ENCODE measurements at regions of chr15 and their contacts with region 1.

Region 1: GRCh38 chr15:59688841-59689625 is at the start of gene BNIP2:
- DNase-seq: peak; percentile 92 to 99 (median 94)
- ATAC-seq: peak; percentile 94
- H3K4me3 ChIP-seq: peak within 1 kb of the TSS; percentile 98
- H3K27ac ChIP-seq: peak within 1 kb of the TSS; percentile 99
- H3K4me1 ChIP-seq: peaks cover 12 to 17% of the 10 kb centered on the region in 2 experiments
- H3K27me3 ChIP-seq: no peaks in the 10 kb centered on the region
- CTCF ChIP-seq: peak in 1 of 3 experiments; percentile 24; a peak in 2 of 6 replicates
- EP300 ChIP-seq: 0 out of 2 replicates have a peak, but pooled peaks have one; percentile 1
- POLR2A ChIP-seq: peak; percentile 88
- RAD21 ChIP-seq: no peak
- polyA plus RNA-seq, gene BNIP2: 19.6 to 22.2 TPM

Region 2: DNA sequence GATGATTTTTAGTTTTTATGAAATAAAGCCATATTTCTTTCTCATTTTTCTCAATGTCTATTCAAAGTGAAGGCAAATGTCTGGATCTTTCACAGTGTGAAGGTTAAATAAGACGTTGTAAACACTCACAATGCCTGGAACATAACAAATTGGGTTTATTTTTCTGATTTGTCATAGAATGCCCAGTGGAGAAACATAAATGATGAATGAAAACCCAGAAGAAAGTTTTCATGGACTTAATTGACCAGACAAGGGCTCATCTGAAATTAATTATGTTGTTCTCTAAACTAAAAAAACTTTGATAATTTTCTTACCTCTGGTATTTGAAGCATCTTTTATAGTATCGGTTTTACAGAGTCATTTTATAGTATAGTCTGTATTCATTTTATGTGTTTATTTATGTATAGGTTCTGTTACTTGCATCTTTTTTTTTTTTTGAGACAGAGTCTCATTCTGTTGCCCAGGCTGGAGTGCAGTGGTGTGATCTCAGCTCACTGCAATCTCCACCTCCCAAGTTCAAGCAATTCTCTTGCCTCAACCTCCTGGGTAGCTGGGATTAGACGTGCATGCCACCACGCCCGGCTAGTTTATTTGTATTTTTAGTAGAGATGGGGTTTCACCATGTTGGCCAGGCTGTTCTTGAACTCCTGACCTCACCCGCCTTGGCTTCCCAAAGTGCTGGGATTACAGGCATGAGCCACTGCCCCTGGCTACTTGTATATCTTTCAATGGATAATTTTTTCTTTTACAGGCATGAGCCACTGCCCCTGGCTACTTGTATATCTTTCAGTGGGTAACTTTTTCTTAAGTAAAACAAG is 15.2 kb after region 1 on chr15:
- CTCF ChIA-PET with region 1: no interaction called
- POLR2A ChIA-PET with region 1: no interaction called
- in situ Hi-C with region 1: no loop called
- intact Hi-C with region 1: no loop called
- DNase-seq: no peak
- ATAC-seq: no peak
- H3K4me3 ChIP-seq: no peak overlapping the region
- H3K27ac ChIP-seq: no peak overlapping the region
- H3K4me1 ChIP-seq: 0 out of 5 replicates have a peak, but pooled peaks cover 0 to 2% of the 10 kb centered on the region in 2 experiments
- H3K27me3 ChIP-seq: no peaks in the 10 kb centered on the region; a peak in 1 of 5 replicates
- CTCF ChIP-seq: no peak
- EP300 ChIP-seq: no peak
- POLR2A ChIP-seq: no peak
- RAD21 ChIP-seq: no peak

Region 3: DNA sequence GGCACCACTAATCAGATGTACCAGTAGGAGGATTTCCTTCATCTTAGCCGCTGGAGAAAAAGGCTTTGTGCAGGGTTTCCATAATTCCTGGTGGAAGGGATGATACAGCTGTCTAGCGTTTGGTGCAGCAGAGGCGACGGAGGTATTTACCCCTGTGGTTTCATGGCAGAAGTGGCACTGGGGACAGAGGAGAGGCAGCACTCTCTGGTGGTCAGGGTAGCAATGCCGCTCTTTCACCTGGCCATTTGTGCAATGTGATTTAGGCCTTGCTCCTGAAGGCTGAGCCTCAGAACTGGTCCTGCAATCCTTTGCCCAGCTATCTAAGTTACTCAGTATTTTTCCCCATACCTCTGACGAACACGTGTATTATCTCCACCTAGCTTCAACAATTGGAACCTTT is 47.2 kb after region 1 on chr15:
- CTCF ChIA-PET with region 1: no interaction called
- POLR2A ChIA-PET with region 1: no interaction called
- in situ Hi-C with region 1: no loop called
- intact Hi-C with region 1: loop called (anchors 5 kb)
- DNase-seq: no peak
- ATAC-seq: no peak
- H3K4me3 ChIP-seq: no peak overlapping the region
- H3K27ac ChIP-seq: no peak overlapping the region
- H3K4me1 ChIP-seq: no peaks in the 10 kb centered on the region
- H3K27me3 ChIP-seq: peaks cover 15 to 21% of the 10 kb centered on the region in 2 experiments
- CTCF ChIP-seq: peak in 2 of 3 experiments; percentile 11 to 12; a peak in 2 of 6 replicates
- EP300 ChIP-seq: no peak
- POLR2A ChIP-seq: no peak
- RAD21 ChIP-seq: peak in 1 of 2 experiments; percentile 23; a peak in 1 of 4 replicates

Region 4: GRCh38 chr15:59917504-59918157 is 228.6 kb after region 1 on chr15:
- CTCF ChIA-PET with region 1: no interaction called
- POLR2A ChIA-PET with region 1: no interaction called
- in situ Hi-C with region 1: no loop called
- intact Hi-C with region 1: loop called (anchors 10 kb)
- DNase-seq: peak; percentile 35 to 63 (median 52)
- ATAC-seq: peak; percentile 100
- H3K4me3 ChIP-seq: no peak overlapping the region
- H3K27ac ChIP-seq: no peak overlapping the region
- H3K4me1 ChIP-seq: no peaks in the 10 kb centered on the region
- H3K27me3 ChIP-seq: peaks cover 0 to under 1% of the 10 kb centered on the region in 2 experiments; a peak in 2 of 5 replicates
- CTCF ChIP-seq: peak; percentile 66 to 70 (median 67)
- EP300 ChIP-seq: no peak
- POLR2A ChIP-seq: no peak
- RAD21 ChIP-seq: peak; percentile 75 to 78

Region 5: DNA sequence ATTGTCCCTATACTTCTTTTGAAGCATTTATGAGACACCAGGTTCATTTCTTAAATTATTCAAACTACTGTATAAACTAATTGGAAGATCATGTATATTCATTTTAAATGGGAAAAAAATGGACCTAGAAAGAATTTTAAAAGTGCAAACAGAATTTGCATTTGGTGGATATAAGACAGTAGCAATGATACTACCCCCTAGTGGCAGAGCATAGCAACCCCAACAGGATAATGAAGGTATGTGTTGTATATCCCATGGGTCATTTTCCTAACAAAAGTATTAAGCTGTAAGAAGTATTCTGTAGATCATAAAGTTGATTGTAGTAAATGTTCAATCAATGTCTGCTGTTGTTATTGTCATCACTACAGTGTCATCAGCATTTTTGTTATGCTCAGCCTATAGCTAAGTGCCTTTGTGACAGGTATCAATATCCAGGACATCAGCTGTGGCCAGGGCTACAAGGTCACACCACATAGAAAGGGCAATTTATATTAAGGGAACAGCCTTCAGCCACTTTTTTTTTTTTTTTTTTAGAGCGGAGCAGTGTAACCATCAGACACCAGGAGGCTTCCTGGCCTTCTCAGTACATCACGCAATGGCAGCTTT is 490.9 kb after region 1 on chr15:
- CTCF ChIA-PET with region 1: interaction called, 5 read pairs
- POLR2A ChIA-PET with region 1: no interaction called
- in situ Hi-C with region 1: no loop called
- intact Hi-C with region 1: loop called (anchors 5 kb)
- DNase-seq: peak; percentile 24 to 42 (median 34)
- ATAC-seq: peak; percentile 86
- H3K4me3 ChIP-seq: no peak overlapping the region
- H3K27ac ChIP-seq: no peak overlapping the region
- H3K4me1 ChIP-seq: no peaks in the 10 kb centered on the region
- H3K27me3 ChIP-seq: peaks cover 6 to 9% of the 10 kb centered on the region in 2 experiments; a peak in 2 of 5 replicates
- CTCF ChIP-seq: peak; percentile 45 to 77 (median 61); a peak in 5 of 6 replicates
- EP300 ChIP-seq: no peak
- POLR2A ChIP-seq: no peak
- RAD21 ChIP-seq: peak; percentile 71 to 79

Region 6: GRCh38 chr15:60326824-60327654 is 638.0 kb after region 1 on chr15:
- CTCF ChIA-PET with region 1: interaction called, 17 read pairs
- POLR2A ChIA-PET with region 1: no interaction called
- in situ Hi-C with region 1: loop called (anchors 10 kb)
- intact Hi-C with region 1: loop called (anchors 1 kb)
- DNase-seq: peak; percentile 31 to 68 (median 48)
- ATAC-seq: peak; percentile 69
- H3K4me3 ChIP-seq: no peak overlapping the region
- H3K27ac ChIP-seq: no peak overlapping the region
- H3K4me1 ChIP-seq: no peaks in the 10 kb centered on the region
- H3K27me3 ChIP-seq: peaks cover 0 to 10% of the 10 kb centered on the region in 2 experiments; a peak in 3 of 5 replicates
- CTCF ChIP-seq: peak; percentile 69 to 92 (median 75)
- EP300 ChIP-seq: no peak
- POLR2A ChIP-seq: no peak
- RAD21 ChIP-seq: peak; percentile 91 to 95

Region 7: GRCh38 chr15:60478566-60479360 is 789.7 kb after region 1 on chr15 and contains the start of gene ICE2:
- CTCF ChIA-PET with region 1: no interaction called
- POLR2A ChIA-PET with region 1: interaction called, 3 read pairs
- in situ Hi-C with region 1: no loop called
- intact Hi-C with region 1: loop called (anchors 2 kb)
- DNase-seq: peak; percentile 90 to 97 (median 90)
- ATAC-seq: peak; percentile 92
- H3K4me3 ChIP-seq: peak within 1 kb of the TSS; percentile 80
- H3K27ac ChIP-seq: peak within 1 kb of the TSS; percentile 95
- H3K4me1 ChIP-seq: peaks cover 0 to 11% of the 10 kb centered on the region in 2 experiments; a peak in 2 of 5 replicates
- H3K27me3 ChIP-seq: no peaks in the 10 kb centered on the region
- CTCF ChIP-seq: peak in 1 of 3 experiments; percentile 12; a peak in 2 of 6 replicates
- EP300 ChIP-seq: peak; percentile 48
- POLR2A ChIP-seq: peak; percentile 97
- RAD21 ChIP-seq: no peak
- polyA plus RNA-seq, gene ICE2: 21.8 to 31.7 TPM

Region 8: DNA sequence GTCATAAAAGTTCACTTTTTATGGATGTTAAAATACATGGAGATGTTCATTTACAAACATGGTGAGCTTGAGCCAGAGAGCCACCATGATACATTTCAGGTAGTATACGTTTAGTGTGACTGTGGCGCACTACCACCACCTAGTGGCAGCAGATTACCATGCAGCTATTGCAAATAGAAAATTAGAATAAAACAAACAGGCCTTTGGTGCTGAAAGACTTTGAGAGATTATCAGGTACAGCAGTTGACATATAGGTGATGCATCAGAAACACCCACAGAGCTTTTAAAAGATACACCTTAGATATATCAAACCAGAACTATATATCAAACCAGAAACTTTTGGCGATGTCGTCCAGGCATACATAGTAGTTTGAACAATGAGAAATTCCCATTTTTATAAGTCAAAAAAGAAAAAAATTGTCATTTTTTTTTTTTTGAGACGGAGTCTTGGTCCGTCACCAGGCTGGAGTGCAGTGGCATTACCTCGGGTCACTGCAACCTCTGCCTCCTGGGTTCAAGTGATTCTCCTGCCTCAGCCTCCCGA is 831.9 kb after region 1 on chr15:
- CTCF ChIA-PET with region 1: interaction called, 3 read pairs
- POLR2A ChIA-PET with region 1: no interaction called
- in situ Hi-C with region 1: loop called (anchors 10 kb)
- intact Hi-C with region 1: no loop called
- DNase-seq: peak; percentile 52 to 80 (median 54)
- ATAC-seq: peak; percentile 91
- H3K4me3 ChIP-seq: no peak overlapping the region
- H3K27ac ChIP-seq: no peak overlapping the region
- H3K4me1 ChIP-seq: no peaks in the 10 kb centered on the region
- H3K27me3 ChIP-seq: peaks cover 2 to 6% of the 10 kb centered on the region in 2 experiments; a peak in 3 of 5 replicates
- CTCF ChIP-seq: peak; percentile 80 to 94 (median 87)
- EP300 ChIP-seq: no peak
- POLR2A ChIP-seq: no peak
- RAD21 ChIP-seq: peak; percentile 86 to 89